GM10248 (cell line): ENCODE measurements at regions of chr11 and their contacts with region 1.

Region 1: DNA sequence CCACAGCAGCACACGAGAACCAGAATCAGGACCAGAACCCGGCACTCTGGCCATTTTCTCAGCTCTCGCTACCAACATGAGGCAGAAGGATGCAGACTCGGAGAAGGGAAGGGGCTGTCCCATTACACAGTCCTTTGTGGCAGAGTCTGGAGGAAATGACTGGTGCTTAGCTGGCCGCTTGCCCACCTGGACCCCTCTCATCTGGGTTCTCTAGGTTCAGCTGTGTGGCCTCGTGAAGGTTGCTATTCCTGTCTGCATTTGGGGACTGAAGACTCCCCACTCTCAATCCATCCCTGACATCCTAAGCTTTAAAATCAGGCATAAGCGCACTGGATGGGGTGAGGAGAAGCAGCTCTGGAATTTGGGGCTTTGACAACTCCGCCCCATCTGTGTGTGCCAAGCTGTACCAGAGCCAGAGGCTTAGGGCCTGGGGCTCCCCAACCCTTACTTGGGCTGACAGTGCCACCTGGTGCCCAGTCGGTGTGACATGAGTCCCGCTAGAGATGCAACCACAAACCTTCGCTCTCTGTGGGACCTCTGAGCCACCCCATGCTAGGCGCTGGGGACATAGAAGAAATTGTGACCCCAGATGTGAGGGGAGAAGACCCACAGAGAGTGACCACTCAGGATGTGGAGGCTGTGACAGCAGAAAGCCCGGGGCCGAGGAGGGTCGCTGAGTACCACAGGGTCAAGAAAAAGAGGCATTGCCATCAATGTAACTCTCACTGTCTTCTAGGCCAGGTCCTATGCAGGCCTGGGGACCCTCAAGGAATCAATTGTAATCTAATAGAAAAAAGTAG is 35.9 kb upstream of the FCHSD2 start:
- DNase-seq: peak; percentile 90
- CTCF ChIP-seq: peak; percentile 81

Region 2: DNA sequence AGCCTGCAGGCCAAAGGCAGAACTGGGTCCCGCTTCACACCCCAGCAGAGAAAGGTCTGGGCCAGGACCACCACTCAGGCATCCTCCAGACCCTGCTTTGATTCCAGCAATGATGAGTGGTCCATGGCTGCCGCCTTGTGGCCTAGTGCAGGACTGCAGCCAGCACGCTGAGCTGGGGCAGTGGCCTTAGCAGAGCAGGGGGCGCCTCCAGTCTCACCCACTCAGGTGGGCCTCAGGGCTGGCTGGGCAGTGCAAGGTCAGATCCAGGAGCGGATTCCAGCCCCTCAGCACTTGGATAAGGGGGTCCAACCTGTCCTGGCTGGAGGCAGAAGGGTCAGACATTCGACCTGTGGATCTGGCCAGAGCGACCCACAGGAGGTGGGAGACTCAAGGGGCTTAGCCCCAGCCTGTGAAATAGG is 494.2 kb before region 1 on chr11:
- CTCF ChIA-PET with region 1: interaction called, 13 read pairs
- POLR2A ChIA-PET with region 1: no interaction called
- DNase-seq: peak; percentile 85
- CTCF ChIP-seq: peak; percentile 96

Region 3: GRCh38 chr11:72831513-72832300 is 346.3 kb before region 1 on chr11:
- CTCF ChIA-PET with region 1: interaction called, 204 read pairs
- POLR2A ChIA-PET with region 1: no interaction called
- DNase-seq: no peak
- CTCF ChIP-seq: peak; percentile 87

Region 4: GRCh38 chr11:72848846-72849466 is 329.0 kb before region 1 on chr11:
- CTCF ChIA-PET with region 1: interaction called, 15 read pairs
- POLR2A ChIA-PET with region 1: no interaction called
- DNase-seq: no peak
- CTCF ChIP-seq: peak; percentile 32

Region 5: DNA sequence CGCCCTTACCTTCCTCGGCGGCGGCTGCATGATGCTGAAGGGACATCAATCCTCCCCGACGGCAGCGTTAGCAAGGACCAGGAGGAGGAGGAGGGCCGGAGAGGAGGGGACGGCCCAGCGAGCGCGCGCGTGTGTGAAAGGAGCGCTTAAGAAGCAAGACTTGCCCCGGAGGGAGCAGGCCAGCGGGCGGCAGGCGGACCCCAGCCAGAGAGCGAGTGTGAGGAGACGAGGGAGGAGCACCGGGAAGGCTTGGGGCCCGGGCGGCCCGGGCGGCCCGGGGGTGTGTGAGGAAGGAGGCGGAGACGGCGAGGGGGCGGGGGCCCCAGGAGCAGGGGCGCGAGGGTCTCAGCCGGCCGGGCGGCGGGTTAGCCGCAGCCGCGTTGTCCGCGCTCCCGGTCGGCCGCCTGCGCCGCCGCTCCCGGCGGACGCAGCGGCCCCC is 36.1 kb before region 1 on chr11:
- CTCF ChIA-PET with region 1: interaction called, 59 read pairs
- POLR2A ChIA-PET with region 1: interaction called, 7 read pairs
- DNase-seq: peak; percentile 68
- CTCF ChIP-seq: no peak

Region 6: GRCh38 chr11:73164803-73165540 is 13.0 kb before region 1 on chr11:
- CTCF ChIA-PET with region 1: interaction called, 115 read pairs
- POLR2A ChIA-PET with region 1: interaction called, 3 read pairs
- DNase-seq: no peak
- CTCF ChIP-seq: no peak

Region 7: GRCh38 chr11:73288873-73289707 is 111.1 kb after region 1 on chr11:
- CTCF ChIA-PET with region 1: interaction called, 10 read pairs
- POLR2A ChIA-PET with region 1: no interaction called
- DNase-seq: peak; percentile 89
- CTCF ChIP-seq: peak; percentile 90